Dorsolateral prefrontal cortex (tissue), 120 donors: ENCODE measurements at regions of chr6 and their contacts with region 1.

Region 1: GRCh38 chr6:162856885-162857284 is 129.1 kb downstream of the PACRG start:
- DNase-seq: peak in 7 of 10 donors; percentile 14 to 81 (median 64)
- H3K4me3 ChIP-seq: peak overlapping the region in 56 of 59 donors; percentile 17 to 67 (median 42)
- H3K27ac ChIP-seq: peak overlapping the region; percentile 72 to 98 (median 93)
- H3K27me3 ChIP-seq: no peaks in the 10 kb centered on the region
- CTCF ChIP-seq: peak; percentile 71 to 92 (median 84)

Region 2: DNA sequence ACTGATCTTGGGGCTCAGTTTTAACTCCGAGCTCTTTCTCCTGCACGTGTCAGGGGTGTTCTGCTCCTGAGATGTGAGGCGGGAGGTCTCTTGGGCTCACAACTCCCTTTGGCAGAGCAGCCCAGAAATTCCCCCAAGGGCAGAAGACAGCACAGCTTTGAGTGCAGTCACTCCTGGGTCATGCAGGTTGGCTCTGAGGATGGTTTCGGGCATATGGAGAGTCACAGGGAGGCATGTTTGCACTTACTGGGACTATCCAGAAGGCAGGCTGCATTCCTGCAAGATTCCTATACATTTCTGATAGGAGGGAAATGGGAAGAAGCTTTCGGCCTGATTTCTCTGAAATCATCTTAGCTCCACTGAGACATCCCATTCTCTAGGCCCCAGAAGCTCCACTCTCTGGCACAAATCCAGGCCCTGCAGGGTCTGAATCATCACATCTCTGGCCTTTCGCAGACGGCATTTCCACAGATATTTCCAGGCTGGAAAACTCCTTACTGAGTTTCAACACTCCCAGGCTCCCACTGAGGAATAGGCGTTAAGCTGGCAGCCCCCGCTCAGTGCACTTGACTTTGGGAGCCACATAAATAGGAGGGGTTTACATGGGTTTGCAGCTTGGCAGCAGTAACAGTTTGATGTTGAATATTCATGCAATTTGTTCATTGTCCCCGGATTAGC is 1622.8 kb before region 1 on chr6:
- intact Hi-C with region 1: no loop called
- DNase-seq: peak in 9 of 10 donors; percentile 59 to 87 (median 69)
- H3K4me3 ChIP-seq: peak overlapping the region in 6 of 59 donors; percentile 6 to 31 (median 18)
- H3K27ac ChIP-seq: peak overlapping the region; percentile 1 to 89 (median 78)
- H3K27me3 ChIP-seq: no peaks in the 10 kb centered on the region
- CTCF ChIP-seq: peak in 1 of 56 donors; percentile 12

Region 3: DNA sequence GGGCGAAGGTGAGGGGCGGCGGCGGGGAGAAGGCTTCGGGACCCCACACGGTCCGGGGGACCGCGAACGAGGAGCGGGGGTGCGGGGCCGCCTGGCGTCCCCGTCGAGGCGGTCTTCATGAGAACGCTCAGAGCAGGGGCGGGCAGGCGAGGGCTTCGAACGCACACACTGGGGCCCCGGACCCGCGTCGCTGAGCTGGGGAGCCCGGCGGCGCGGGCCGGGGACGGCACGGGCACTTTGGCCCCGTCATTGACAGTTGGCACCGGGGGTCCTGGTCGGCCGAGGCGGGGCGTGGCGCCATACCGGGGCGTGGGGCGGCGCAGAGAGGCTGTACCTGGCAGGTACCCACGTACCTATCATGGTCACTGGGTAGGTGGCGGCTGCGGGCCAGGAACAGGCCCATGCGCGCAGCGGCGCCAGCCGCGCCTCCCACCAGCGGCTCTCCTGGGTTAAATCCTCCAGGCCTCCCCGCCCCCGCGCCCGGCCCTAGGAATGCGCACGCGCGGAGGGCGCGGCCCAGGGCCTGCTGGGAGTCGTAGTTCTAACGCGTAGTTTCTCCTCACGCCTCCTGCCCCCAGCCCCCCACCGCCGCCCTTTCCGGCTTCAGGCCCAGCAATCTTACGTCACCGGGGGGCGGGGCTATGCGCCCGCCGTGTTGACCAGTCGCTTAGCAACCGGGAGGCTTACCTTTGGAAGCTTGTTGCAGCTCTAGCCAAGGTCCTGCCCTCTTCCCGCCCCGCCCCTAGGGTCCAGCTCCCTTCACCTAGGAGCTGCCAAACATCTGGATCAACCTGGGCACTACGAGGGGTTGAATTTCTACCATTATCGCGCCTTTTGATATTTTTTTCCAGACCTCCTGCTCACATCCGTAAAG is 129.3 kb before region 1 on chr6 and contains the starts of genes PACRG and PRKN:
- intact Hi-C with region 1: loop called in 1 of 2 experiments (anchors 10 kb)
- DNase-seq: peak; percentile 98 to 99 (median 99)
- H3K4me3 ChIP-seq: peak within 1 kb of the TSS; percentile 39 to 99 (median 90)
- H3K27ac ChIP-seq: peak within 1 kb of the TSS in 58 of 59 donors; percentile 13 to 96 (median 86)
- H3K27me3 ChIP-seq: no peaks in the 10 kb centered on the region
- CTCF ChIP-seq: peak in 18 of 56 donors; percentile 3 to 47 (median 26)
- total RNA-seq, gene PACRG: 4.8 to 37.4 (median 13.1) TPM
- total RNA-seq, gene PRKN: 13.1 to 41.5 (median 26.1) TPM

Region 4: GRCh38 chr6:163180874-163181541 is 324.1 kb after region 1 on chr6:
- intact Hi-C with region 1: loop called (anchors 2 to 5 kb)
- DNase-seq: peak; percentile 36 to 96 (median 92)
- H3K4me3 ChIP-seq: peak overlapping the region in 36 of 59 donors; percentile 4 to 54 (median 36)
- H3K27ac ChIP-seq: peak overlapping the region in 58 of 59 donors; percentile 72 to 100 (median 97)
- H3K27me3 ChIP-seq: no peaks in the 10 kb centered on the region
- CTCF ChIP-seq: peak; percentile 68 to 96 (median 86)

Region 5: GRCh38 chr6:163249651-163250101 is 392.8 kb after region 1 on chr6:
- intact Hi-C with region 1: loop called (anchors 5 kb)
- DNase-seq: peak in 4 of 10 donors; percentile 34 to 70 (median 56)
- H3K4me3 ChIP-seq: no peak overlapping the region
- H3K27ac ChIP-seq: peak overlapping the region; percentile 77 to 100 (median 98)
- H3K27me3 ChIP-seq: no peaks in the 10 kb centered on the region
- CTCF ChIP-seq: no peak

Region 6: GRCh38 chr6:163585932-163586437 is 729.1 kb after region 1 on chr6:
- intact Hi-C with region 1: loop called in 1 of 2 experiments (anchors 10 kb)
- DNase-seq: no peak
- H3K4me3 ChIP-seq: peak overlapping the region in 4 of 59 donors; percentile 3 to 13 (median 10)
- H3K27ac ChIP-seq: peak overlapping the region in 14 of 59 donors; percentile 21 to 76 (median 37)
- H3K27me3 ChIP-seq: no peaks in the 10 kb centered on the region
- CTCF ChIP-seq: no peak